H1 (cell line): ENCODE measurements at regions of chr6 and their contacts with region 1.

Region 1: GRCh38 chr6:44431118-44431725 is 43.7 kb downstream of the CDC5L start:
- DNase-seq: no peak
- H3K4me3 ChIP-seq: no peak overlapping the region
- H3K27ac ChIP-seq: no peak overlapping the region
- H3K4me1 ChIP-seq: no peaks in the 10 kb centered on the region
- H3K27me3 ChIP-seq: no peaks in the 10 kb centered on the region
- CTCF ChIP-seq: peak in 2 of 3 experiments; percentile 61 to 67; a peak in 3 of 4 replicates
- EP300 ChIP-seq: no peak
- POLR2A ChIP-seq: no peak
- RAD21 ChIP-seq: peak; percentile 70 to 80

Region 2: DNA sequence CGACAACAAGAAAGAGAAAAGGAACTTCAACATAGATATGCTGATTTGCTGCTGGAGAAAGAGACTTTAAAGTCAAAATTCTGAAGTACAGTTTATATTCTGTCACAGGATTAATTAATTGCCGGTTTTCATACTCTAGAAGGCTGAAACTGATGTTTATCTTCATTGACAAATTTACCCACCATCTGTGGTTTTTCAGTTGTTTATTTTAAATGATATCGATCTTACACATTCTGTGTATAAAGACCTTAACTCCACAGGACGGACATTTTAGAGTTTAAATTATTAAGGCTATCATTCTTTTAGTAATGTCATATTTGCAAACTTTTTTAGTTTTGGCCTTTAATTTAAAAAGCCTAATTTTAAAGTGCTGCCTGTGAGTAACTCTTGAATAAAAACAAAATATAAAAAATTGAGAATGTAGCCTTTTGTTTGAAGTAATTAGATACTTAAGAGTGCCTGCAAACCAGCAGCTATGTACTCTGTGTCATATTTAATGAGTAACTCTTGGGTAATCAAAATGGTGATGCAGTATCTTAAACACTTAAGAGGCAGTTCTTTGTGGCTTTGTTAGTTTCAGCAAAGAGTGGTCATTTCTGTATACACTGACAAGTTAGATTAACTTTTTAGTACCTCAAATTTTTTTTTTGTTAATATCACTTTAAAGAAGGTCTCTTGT is 15.5 kb after region 1 on chr6:
- CTCF ChIA-PET with region 1: interaction called, 15 read pairs
- POLR2A ChIA-PET with region 1: no interaction called
- DNase-seq: no peak
- H3K4me3 ChIP-seq: no peak overlapping the region
- H3K27ac ChIP-seq: no peak overlapping the region
- H3K4me1 ChIP-seq: no peaks in the 10 kb centered on the region
- H3K27me3 ChIP-seq: no peaks in the 10 kb centered on the region
- CTCF ChIP-seq: no peak
- EP300 ChIP-seq: no peak
- POLR2A ChIP-seq: no peak
- RAD21 ChIP-seq: no peak

Region 3: GRCh38 chr6:44456070-44456965 is 25.1 kb after region 1 on chr6:
- CTCF ChIA-PET with region 1: interaction called, 18 read pairs
- POLR2A ChIA-PET with region 1: no interaction called
- DNase-seq: no peak
- H3K4me3 ChIP-seq: no peak overlapping the region
- H3K27ac ChIP-seq: no peak overlapping the region
- H3K4me1 ChIP-seq: peaks cover 0 to 2% (median under 1%) of the 10 kb centered on the region in 4 experiments; a peak in 2 of 7 replicates
- H3K27me3 ChIP-seq: no peaks in the 10 kb centered on the region
- CTCF ChIP-seq: peak; percentile 72 to 86 (median 85)
- EP300 ChIP-seq: no peak
- POLR2A ChIP-seq: no peak
- RAD21 ChIP-seq: peak; percentile 70 to 79